ENCODE measurements at regions of chr22 and their contacts with region 1.

Region 1: DNA sequence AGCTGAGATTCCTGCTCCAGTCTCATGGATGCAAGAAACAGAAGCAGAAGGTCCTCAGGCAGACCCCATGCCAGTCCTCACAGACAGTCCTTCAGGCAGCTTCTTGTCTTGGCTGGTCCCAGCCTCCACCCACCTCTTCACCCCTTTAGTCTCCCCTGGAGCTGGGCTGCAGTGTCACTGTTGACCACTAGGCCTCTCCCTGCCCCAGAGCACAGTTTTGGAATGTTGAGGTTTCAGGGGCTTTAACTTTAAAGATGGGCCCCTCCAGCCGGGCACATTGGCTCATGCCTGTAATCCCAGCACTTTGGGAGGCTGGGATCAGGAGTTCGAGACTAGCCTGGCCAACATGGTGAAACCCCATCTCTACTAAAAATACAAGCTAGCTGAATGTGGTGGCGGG is 39.5 kb upstream of the GCAT start:
- DNase-seq: peak in 1 of 2 experiments; percentile 62
- H3K4me3 ChIP-seq: no peak overlapping the region
- H3K27ac ChIP-seq: no peak overlapping the region
- H3K4me1 ChIP-seq: no peaks in the 10 kb centered on the region
- H3K27me3 ChIP-seq: no peaks in the 10 kb centered on the region; a peak in 2 of 7 replicates
- CTCF ChIP-seq: peak; percentile 41 to 61 (median 56); a peak in 3 of 4 replicates
- EP300 ChIP-seq: no peak
- POLR2A ChIP-seq: no peak
- RAD21 ChIP-seq: peak; percentile 16 to 40; a peak in 3 of 4 replicates

Region 2: GRCh38 chr22:37519268-37520195 is 248.7 kb before region 1 on chr22 and contains the start of gene CARD10:
- CTCF ChIA-PET with region 1: no interaction called
- POLR2A ChIA-PET with region 1: no interaction called
- DNase-seq: peak in 1 of 2 experiments; percentile 68
- H3K4me3 ChIP-seq: peak within 1 kb of the TSS; percentile 51 to 68 (median 54)
- H3K27ac ChIP-seq: no peak within 1 kb of the TSS
- H3K4me1 ChIP-seq: peaks cover 0 to 7% (median 4%) of the 10 kb centered on the region in 4 experiments; a peak in 3 of 7 replicates
- H3K27me3 ChIP-seq: peaks cover 7 to 25% (median 16%) of the 10 kb centered on the region in 4 experiments; a peak in 6 of 7 replicates
- CTCF ChIP-seq: no peak
- EP300 ChIP-seq: no peak
- POLR2A ChIP-seq: no peak
- RAD21 ChIP-seq: no peak
- total RNA-seq, gene CARD10: 14.4 and 14.6 TPM in 2 replicates

Region 3: DNA sequence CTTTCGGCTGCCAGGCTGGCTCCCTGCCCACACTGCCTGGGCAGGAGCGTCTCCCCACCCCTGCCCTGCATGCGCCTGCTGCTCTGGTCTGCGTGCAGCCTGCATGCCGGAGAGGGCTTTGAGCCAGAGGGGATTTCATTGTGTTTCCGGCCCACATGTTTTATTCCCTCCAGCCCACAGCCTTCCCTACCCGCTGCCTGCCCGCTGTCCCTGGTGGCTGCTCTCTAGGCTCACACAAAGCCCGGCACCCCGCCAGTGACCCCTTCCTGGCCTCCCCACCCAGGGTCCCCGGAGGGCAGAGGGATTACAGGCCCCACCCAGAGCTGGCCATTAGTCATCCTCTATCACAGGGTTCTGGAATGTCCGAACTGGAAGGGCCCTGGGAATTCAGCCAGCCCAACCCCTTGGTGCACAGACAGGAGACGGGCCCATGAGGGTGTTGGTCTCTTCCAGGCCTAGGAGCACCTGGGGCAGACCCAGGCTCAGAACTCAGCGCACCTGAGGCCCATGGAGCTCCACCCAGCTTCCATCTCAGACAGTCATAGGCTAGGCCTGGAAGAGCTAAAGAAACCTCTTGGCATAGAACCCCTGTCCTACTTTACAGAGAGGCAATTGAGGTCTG is 15.7 kb before region 1 on chr22:
- CTCF ChIA-PET with region 1: interaction called, 75 read pairs
- POLR2A ChIA-PET with region 1: interaction called, 5 read pairs
- DNase-seq: no peak
- H3K4me3 ChIP-seq: no peak overlapping the region
- H3K27ac ChIP-seq: no peak overlapping the region
- H3K4me1 ChIP-seq: peaks cover 0 to 13% (median 5%) of the 10 kb centered on the region in 4 experiments; a peak in 4 of 7 replicates
- H3K27me3 ChIP-seq: peaks cover 0 to 4% (median 2%) of the 10 kb centered on the region in 4 experiments; a peak in 3 of 7 replicates
- CTCF ChIP-seq: no peak
- EP300 ChIP-seq: no peak
- POLR2A ChIP-seq: no peak
- RAD21 ChIP-seq: no peak

Measured in H1 (cell line).